Activated T-helper 1 cell treated with anti-CD3 and anti-CD28 coated beads, Interleukin-12 subunit alpha, Interleukin-12 subunit beta, Interleukin-2, Interleukin-4 antibody, amounts not matched to agents 30 ng/mL and 10 ng/mL and 1 ng/mL, durations not matched to agents 14 hours and 24 hours and 36 hours (primary cell): ENCODE measurements at regions of chr2 and their contacts with region 1.

Region 1: GRCh38 chr2:174487108-174487819 is 435 bp upstream of the GPR155 start:
- DNase-seq: peak; percentile 88
- H3K4me3 Mint-ChIP-seq: peak overlapping the region; percentile 89
- H3K27ac Mint-ChIP-seq: peak overlapping the region; percentile 68
- H3K4me1 Mint-ChIP-seq: peaks cover 72% of the 10 kb centered on the region
- H3K27me3 Mint-ChIP-seq: no peaks in the 10 kb centered on the region

Region 2: GRCh38 chr2:172555522-172556283 is 1931.6 kb before region 1 on chr2 and contains the start of gene PDK1:
- intact Hi-C with region 1: loop called (anchors 2 kb)
- DNase-seq: peak; percentile 91
- H3K4me3 Mint-ChIP-seq: peak within 1 kb of the TSS; percentile 97
- H3K27ac Mint-ChIP-seq: peak within 1 kb of the TSS; percentile 98
- H3K4me1 Mint-ChIP-seq: peaks cover 65% of the 10 kb centered on the region
- H3K27me3 Mint-ChIP-seq: no peaks in the 10 kb centered on the region
- total RNA-seq, gene PDK1: 27.6 and 35.8 TPM in 2 replicates

Region 3: DNA sequence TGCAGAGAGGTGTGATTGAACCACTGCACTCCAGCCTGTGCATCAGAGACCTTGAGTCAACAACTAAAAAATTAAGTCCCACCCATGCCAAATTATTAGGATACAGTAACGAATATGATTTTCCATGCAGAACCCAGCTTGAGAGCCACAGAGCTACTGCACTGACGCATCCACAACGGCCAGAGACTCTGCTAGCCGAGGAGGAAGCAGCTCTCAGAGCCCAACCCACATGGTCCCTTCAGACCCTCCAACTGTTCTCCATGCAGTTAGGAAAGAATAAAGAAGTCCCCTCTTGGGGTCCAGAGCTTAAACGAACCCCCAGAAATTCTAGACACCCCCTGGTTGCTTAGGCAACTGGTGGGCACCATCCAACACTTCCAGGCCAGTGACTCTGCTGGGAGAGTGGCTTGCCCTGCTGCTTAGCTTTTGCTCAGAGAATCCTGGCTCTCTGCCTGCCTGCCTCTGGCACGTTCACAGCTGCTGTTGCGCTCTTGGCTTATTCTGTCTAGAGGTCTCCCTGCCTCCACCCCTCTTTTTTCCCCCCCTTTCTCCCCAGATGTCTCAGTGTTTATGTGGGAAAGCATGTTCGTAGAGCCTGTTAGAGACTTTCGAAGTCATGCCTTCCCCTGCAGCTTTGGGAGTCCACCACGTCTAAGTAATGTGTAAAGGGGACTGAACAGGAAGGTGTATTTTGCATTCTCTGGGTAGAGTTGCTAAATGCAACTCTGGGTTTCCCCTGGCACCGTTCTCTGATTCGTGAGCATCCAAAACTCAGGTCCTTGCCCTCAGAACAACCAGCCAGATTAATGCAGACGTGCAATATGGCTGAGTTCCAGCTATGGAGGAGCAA is 496.1 kb before region 1 on chr2:
- intact Hi-C with region 1: no loop called
- DNase-seq: no peak
- H3K4me3 Mint-ChIP-seq: no peak overlapping the region
- H3K27ac Mint-ChIP-seq: no peak overlapping the region
- H3K4me1 Mint-ChIP-seq: peaks cover under 1% of the 10 kb centered on the region
- H3K27me3 Mint-ChIP-seq: peaks cover 18% of the 10 kb centered on the region

Region 4: GRCh38 chr2:174209325-174209724 is 277.9 kb before region 1 on chr2:
- intact Hi-C with region 1: no loop called
- DNase-seq: no peak
- H3K4me3 Mint-ChIP-seq: no peak overlapping the region
- H3K27ac Mint-ChIP-seq: no peak overlapping the region
- H3K4me1 Mint-ChIP-seq: peaks cover 4% of the 10 kb centered on the region
- H3K27me3 Mint-ChIP-seq: no peaks in the 10 kb centered on the region

Region 5: GRCh38 chr2:174395284-174395968 is 91.8 kb before region 1 on chr2 and contains the start of gene SCRN3:
- intact Hi-C with region 1: loop called (anchors 1 kb)
- DNase-seq: peak; percentile 74
- H3K4me3 Mint-ChIP-seq: peak within 1 kb of the TSS; percentile 95
- H3K27ac Mint-ChIP-seq: peak within 1 kb of the TSS; percentile 97
- H3K4me1 Mint-ChIP-seq: peaks cover 44% of the 10 kb centered on the region
- H3K27me3 Mint-ChIP-seq: no peaks in the 10 kb centered on the region
- total RNA-seq, gene SCRN3: 14.0 and 19.8 TPM in 2 replicates

Region 6: DNA sequence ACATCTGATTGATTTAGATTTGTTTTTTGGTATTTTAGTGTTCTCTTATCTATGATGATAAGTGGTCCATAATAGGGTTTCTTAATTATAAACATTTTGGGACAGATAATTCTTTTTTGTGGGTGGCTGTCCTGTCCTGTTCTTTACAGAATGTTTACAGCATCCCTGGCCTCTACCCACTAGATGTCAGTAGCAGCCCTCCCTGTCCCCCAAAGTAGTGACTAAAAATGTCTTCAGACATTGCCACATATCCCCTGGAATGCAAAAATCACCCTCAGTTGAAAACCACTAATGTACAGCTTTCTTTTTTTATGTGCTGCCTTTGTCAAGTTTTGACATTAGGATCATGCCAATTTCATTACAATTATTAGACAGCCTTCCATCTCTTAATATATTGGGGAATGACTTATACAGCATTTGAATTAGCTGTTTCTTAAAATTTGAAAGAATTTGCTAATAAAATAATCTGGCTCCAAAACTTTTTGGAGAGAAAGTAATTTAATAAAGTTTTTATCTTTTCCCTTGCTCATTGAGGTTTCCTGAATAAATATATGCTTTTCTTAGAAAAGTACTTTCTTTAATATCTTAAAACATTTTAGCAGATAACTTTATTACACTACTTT is 90.8 kb after region 1 on chr2:
- intact Hi-C with region 1: loop called (anchors 2 kb)
- DNase-seq: no peak
- H3K4me3 Mint-ChIP-seq: no peak overlapping the region
- H3K27ac Mint-ChIP-seq: no peak overlapping the region
- H3K4me1 Mint-ChIP-seq: peaks cover 60% of the 10 kb centered on the region
- H3K27me3 Mint-ChIP-seq: no peaks in the 10 kb centered on the region

Region 7: DNA sequence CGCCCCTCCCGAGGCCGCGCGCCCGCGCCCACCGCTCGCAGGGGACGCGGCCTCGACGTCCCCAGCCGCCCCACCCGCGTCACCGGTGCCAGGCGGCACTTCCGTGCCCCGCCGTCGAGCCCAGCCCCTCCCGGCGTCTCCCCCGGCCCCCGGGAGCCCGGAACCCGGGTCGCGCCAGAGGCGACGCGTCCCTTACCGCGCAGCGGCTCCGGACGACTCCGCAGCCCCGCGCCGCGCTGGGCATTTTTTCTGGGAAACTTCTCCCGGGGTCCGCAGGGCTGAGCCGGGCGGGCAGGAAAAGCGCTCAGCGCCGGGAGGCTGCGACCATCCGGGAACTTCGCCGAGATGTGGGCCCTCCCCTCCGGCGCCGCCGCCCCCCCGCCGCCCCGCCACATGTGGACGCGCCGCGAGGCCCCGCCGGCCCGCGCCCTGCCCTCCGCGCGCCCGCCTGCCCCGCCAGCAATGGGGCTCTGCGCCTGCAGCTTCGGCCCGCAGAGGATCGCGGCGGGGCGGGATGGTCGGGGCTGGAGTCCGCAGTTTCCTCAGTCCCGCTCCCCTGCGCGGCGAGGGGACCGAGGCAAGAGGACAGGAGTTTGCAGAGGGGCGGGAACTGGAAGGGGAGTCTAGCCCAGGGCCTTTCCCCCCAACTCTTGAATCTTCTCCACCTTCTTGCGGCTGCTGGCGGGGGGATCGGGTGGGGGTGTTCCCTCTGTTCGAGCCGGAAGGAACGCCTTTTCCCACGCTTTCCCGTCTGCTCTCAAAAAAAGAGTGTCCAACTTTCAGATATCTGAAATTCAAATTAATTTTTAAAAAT is 195.5 kb after region 1 on chr2:
- intact Hi-C with region 1: loop called (anchors 2 kb)
- DNase-seq: peak; percentile 57
- H3K4me3 Mint-ChIP-seq: peak overlapping the region; percentile 96
- H3K27ac Mint-ChIP-seq: peak overlapping the region; percentile 95
- H3K4me1 Mint-ChIP-seq: peaks cover 74% of the 10 kb centered on the region
- H3K27me3 Mint-ChIP-seq: no peaks in the 10 kb centered on the region

Region 8: GRCh38 chr2:175167792-175168563 is 680.7 kb after region 1 on chr2 and contains the start of gene ATF2:
- intact Hi-C with region 1: loop called (anchors 1 kb)
- DNase-seq: peak; percentile 98
- H3K4me3 Mint-ChIP-seq: peak within 1 kb of the TSS; percentile 97
- H3K27ac Mint-ChIP-seq: peak within 1 kb of the TSS; percentile 97
- H3K4me1 Mint-ChIP-seq: peaks cover 53% of the 10 kb centered on the region
- H3K27me3 Mint-ChIP-seq: no peaks in the 10 kb centered on the region
- total RNA-seq, gene ATF2: 57.0 and 59.7 TPM in 2 replicates